Gastrocnemius medialis (tissue), 4 donors: ENCODE measurements at regions of chr20 and their contacts with region 1.

Region 1: DNA sequence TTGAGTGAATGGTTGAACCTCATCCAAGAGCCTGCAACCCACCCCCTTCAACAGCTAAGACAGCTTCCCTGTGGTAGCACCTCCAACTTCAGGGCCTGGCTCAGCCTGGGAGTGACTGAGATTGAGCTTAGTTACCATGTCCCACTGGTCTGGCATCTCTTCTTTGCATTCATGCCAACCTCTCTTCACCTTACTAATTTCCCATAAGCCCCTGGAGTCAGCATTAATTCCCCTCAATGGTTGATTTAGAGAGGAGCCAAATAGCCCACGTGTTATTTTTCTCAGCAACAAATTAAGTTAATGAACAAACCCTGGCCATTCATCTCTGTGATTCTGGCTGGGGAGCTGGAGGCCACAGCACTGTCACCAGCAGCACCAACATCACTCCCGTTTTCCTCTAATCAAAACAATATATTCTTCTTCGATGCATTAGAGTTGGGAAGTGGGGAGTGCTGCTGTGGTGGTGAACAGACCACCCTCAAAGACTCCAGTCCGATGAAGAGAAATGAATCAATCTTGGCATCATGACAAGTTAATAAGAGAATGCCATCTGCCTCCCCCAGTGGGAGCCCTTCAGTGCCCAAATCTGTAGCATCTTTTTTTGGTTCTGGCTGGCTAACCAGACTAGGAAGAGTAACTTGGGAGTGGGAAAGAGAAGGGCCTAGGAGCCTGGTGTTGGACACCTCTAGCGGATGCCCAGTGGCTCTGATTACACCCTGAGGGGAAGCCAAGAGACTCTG is 316.9 kb upstream of the RNF24 start:
- DNase-seq: no peak
- ATAC-seq: no peak
- H3K4me3 ChIP-seq: no peak overlapping the region
- H3K27ac ChIP-seq: no peak overlapping the region
- H3K4me1 ChIP-seq: no peaks in the 10 kb centered on the region
- H3K27me3 ChIP-seq: no peaks in the 10 kb centered on the region
- CTCF ChIP-seq: no peak
- POLR2A ChIP-seq: no peak

Region 2: GRCh38 chr20:4401601-4402000 is 69.3 kb after region 1 on chr20:
- in situ Hi-C with region 1: loop called in 1 of 4 experiments (anchors 10 kb)
- intact Hi-C with region 1: no loop called
- DNase-seq: no peak
- ATAC-seq: no peak
- H3K4me3 ChIP-seq: no peak overlapping the region
- H3K27ac ChIP-seq: no peak overlapping the region
- H3K4me1 ChIP-seq: no peaks in the 10 kb centered on the region
- H3K27me3 ChIP-seq: no peaks in the 10 kb centered on the region
- CTCF ChIP-seq: no peak
- POLR2A ChIP-seq: no peak